ENCODE measurements at regions of chr17 and their contacts with region 1.

Region 1: GRCh38 chr17:32519228-32520103 is 32.7 kb downstream of the CDK5R1 start:
- DNase-seq: peak; percentile 87
- H3K4me3 Mint-ChIP-seq: peak overlapping the region; percentile 79
- H3K27ac Mint-ChIP-seq: peak overlapping the region; percentile 90
- H3K4me1 Mint-ChIP-seq: peaks cover 78% of the 10 kb centered on the region
- H3K27me3 Mint-ChIP-seq: no peaks in the 10 kb centered on the region

Region 2: GRCh38 chr17:32222620-32223019 is 296.8 kb before region 1 on chr17:
- CTCF ChIA-PET with region 1: no interaction called
- POLR2A ChIA-PET with region 1: no interaction called
- intact Hi-C with region 1: loop called (anchors 5 kb)
- DNase-seq: no peak
- H3K4me3 Mint-ChIP-seq: no peak overlapping the region
- H3K27ac Mint-ChIP-seq: no peak overlapping the region
- H3K4me1 Mint-ChIP-seq: peaks cover 36% of the 10 kb centered on the region
- H3K27me3 Mint-ChIP-seq: no peaks in the 10 kb centered on the region

Region 3: GRCh38 chr17:32396343-32396742 is 123.1 kb before region 1 on chr17:
- CTCF ChIA-PET with region 1: no interaction called
- POLR2A ChIA-PET with region 1: no interaction called
- intact Hi-C with region 1: no loop called
- DNase-seq: no peak
- H3K4me3 Mint-ChIP-seq: no peak overlapping the region
- H3K27ac Mint-ChIP-seq: no peak overlapping the region
- H3K4me1 Mint-ChIP-seq: no peaks in the 10 kb centered on the region
- H3K27me3 Mint-ChIP-seq: no peaks in the 10 kb centered on the region

Region 4: DNA sequence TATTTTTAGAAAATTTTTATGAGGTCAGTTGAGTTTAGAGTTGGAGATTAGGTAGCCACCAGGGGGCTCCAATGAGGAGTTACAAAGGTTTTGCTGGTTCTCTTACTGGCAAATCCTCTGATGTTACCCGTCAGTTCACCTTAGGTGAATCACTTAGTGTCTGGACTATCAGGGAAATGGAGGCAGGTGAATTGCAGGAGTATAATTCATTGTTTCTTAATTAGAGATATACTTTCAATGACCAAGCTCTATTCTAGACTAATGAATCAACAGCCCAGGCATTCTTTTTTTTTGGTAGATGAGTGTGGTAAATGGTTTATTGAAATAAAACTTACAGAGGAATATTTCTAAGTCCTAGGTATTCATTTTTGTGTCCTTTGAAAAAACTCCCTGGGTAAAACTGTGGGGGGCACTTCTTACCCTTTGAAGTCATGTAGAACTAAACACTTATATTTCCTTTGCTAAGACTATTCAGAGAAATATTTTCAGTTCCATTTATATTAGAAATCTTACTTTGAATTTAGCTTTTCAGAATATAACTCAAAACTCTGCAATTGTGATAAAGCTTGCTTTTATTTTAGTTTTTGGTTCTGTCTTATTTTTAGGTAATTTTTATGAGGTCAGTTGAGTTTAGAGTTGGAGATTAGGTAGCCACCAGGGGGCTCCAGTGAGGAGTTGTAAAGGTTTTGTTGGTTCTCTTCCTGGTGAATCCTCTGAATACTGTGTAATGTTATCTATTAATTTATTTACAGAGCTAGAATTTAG is 57.4 kb before region 1 on chr17:
- CTCF ChIA-PET with region 1: interaction called, 11 read pairs
- POLR2A ChIA-PET with region 1: interaction called, 5 read pairs
- intact Hi-C with region 1: loop called (anchors 1 kb)
- DNase-seq: peak; percentile 72
- H3K4me3 Mint-ChIP-seq: no peak overlapping the region
- H3K27ac Mint-ChIP-seq: peak overlapping the region; percentile 72
- H3K4me1 Mint-ChIP-seq: peaks cover 32% of the 10 kb centered on the region
- H3K27me3 Mint-ChIP-seq: no peaks in the 10 kb centered on the region

Region 5: GRCh38 chr17:32475258-32475657 is 44.2 kb before region 1 on chr17:
- CTCF ChIA-PET with region 1: no interaction called
- POLR2A ChIA-PET with region 1: no interaction called
- intact Hi-C with region 1: no loop called
- DNase-seq: no peak
- H3K4me3 Mint-ChIP-seq: no peak overlapping the region
- H3K27ac Mint-ChIP-seq: peak overlapping the region; percentile 6
- H3K4me1 Mint-ChIP-seq: no peaks in the 10 kb centered on the region
- H3K27me3 Mint-ChIP-seq: no peaks in the 10 kb centered on the region

Region 6: GRCh38 chr17:32503251-32504165 is 16.0 kb before region 1 on chr17:
- CTCF ChIA-PET with region 1: interaction called, 4 read pairs
- POLR2A ChIA-PET with region 1: interaction called, 10 read pairs
- intact Hi-C with region 1: loop called (anchors 1 kb)
- DNase-seq: peak; percentile 67
- H3K4me3 Mint-ChIP-seq: peak overlapping the region; percentile 52
- H3K27ac Mint-ChIP-seq: peak overlapping the region; percentile 95
- H3K4me1 Mint-ChIP-seq: peaks cover 66% of the 10 kb centered on the region
- H3K27me3 Mint-ChIP-seq: no peaks in the 10 kb centered on the region

Region 7: DNA sequence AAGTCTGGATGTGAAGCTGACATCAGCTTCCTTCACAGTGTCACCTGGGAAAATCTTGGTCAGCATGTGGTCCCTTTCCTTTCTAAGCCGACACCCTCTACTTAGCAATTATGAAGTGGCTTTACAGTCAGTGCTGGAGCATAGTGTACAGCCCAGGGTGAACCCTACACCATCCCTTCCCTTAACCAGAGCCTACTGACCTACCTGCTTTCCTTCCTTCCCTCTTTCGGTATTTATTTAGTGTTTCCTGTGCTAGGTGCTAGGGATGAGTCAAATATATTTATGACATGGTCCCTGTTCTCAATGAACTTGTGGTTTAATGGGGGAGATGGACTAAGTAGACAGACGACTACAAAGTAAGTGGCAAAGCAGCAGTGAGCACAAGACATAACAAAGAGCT is 44.9 kb after region 1 on chr17:
- CTCF ChIA-PET with region 1: no interaction called
- POLR2A ChIA-PET with region 1: interaction called, 6 read pairs
- intact Hi-C with region 1: loop called (anchors 1 kb)
- DNase-seq: peak; percentile 59
- H3K4me3 Mint-ChIP-seq: no peak overlapping the region
- H3K27ac Mint-ChIP-seq: no peak overlapping the region
- H3K4me1 Mint-ChIP-seq: peaks cover 23% of the 10 kb centered on the region
- H3K27me3 Mint-ChIP-seq: no peaks in the 10 kb centered on the region

Region 8: GRCh38 chr17:32909787-32910369 is 390.4 kb after region 1 on chr17:
- CTCF ChIA-PET with region 1: interaction called, 3 read pairs
- POLR2A ChIA-PET with region 1: no interaction called
- intact Hi-C with region 1: loop called (anchors 10 kb)
- DNase-seq: peak; percentile 79
- H3K4me3 Mint-ChIP-seq: no peak overlapping the region
- H3K27ac Mint-ChIP-seq: no peak overlapping the region
- H3K4me1 Mint-ChIP-seq: peaks cover 20% of the 10 kb centered on the region
- H3K27me3 Mint-ChIP-seq: peaks cover 20% of the 10 kb centered on the region

Measured in activated CD4-positive, alpha-beta memory T cell treated with anti-CD3 and anti-CD28 coated beads for 36 hours (primary cell).